GM12878 (cell line): ENCODE measurements at regions of chr10 and their contacts with region 1.

Region 1: DNA sequence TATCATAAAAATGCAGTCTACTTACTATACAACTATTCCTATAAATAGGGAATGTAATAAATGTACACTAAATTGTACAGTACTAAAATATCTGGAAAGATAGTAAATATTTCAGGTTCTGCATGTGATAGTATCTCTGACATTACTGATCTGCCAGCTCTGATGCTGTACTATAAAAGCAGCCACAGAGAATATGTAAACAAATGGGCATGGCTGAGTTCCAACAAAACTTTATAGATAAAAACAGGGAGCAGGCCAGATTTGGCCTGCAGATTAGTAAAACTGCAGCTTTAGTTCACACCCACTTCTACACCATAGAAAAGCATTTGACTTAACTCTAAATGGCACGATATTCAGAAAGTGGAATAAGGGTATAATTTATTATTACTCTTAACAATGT is 18.8 kb upstream of the TLL2 start:
- DNase-seq: no peak
- ATAC-seq: no peak
- H3K4me3 ChIP-seq: no peak overlapping the region
- H3K27ac ChIP-seq: no peak overlapping the region
- H3K4me1 ChIP-seq: no peaks in the 10 kb centered on the region
- H3K27me3 ChIP-seq: no peaks in the 10 kb centered on the region
- CTCF ChIP-seq: no peak
- EP300 ChIP-seq: no peak
- POLR2A ChIP-seq: no peak
- RAD21 ChIP-seq: no peak

Region 2: DNA sequence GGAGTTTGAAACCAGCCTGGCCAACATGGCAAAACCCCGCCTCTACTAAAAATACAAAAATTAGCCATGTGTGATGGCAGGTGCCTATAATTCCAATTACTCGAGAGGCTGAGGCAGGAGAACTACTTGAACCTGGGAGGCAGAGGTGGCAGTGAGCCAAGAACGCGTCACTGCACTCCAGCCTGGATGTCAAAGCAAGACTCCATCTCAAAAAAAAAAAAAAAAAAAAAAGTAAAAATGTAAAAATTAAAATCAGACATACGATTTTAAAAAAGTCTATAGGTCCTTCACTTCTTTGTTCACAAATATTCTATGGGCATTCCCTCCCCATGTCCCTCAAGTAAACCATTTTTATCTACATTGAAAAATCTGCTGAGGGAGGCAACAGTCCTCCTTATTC is 16.1 kb after region 1 on chr10:
- CTCF ChIA-PET with region 1: interaction called, 7 read pairs
- POLR2A ChIA-PET with region 1: no interaction called
- RAD21 ChIA-PET with region 1: no interaction called
- SMC1A ChIA-PET with region 1: interaction called, 11 read pairs
- in situ Hi-C with region 1: no loop called
- intact Hi-C with region 1: no loop called
- DNase-seq: no peak
- ATAC-seq: no peak
- H3K4me3 ChIP-seq: no peak overlapping the region
- H3K27ac ChIP-seq: no peak overlapping the region
- H3K4me1 ChIP-seq: no peaks in the 10 kb centered on the region
- H3K27me3 ChIP-seq: no peaks in the 10 kb centered on the region
- CTCF ChIP-seq: no peak
- EP300 ChIP-seq: no peak
- POLR2A ChIP-seq: no peak
- RAD21 ChIP-seq: no peak

Region 3: DNA sequence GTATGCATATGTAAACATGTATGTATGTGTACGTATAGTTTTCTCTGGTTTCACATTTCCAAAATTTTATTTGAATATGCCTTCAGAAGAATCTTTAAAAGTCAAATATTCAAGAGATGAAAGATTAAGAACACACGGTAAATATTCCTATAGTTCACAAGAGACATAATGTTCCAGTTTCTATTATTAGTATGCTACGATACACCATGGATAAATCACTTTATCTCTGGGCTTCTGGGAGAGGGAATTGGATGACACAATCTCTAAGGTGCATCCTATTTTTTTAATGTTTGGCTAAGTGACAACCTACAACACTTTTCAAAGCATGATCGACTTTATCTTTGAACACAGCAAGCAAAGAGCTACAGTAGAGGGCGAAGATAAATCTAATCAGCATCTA is 40.5 kb after region 1 on chr10:
- CTCF ChIA-PET with region 1: no interaction called
- POLR2A ChIA-PET with region 1: no interaction called
- RAD21 ChIA-PET with region 1: no interaction called
- SMC1A ChIA-PET with region 1: no interaction called
- in situ Hi-C with region 1: no loop called
- intact Hi-C with region 1: loop called (anchors 2 kb)
- DNase-seq: no peak
- ATAC-seq: no peak
- H3K4me3 ChIP-seq: no peak overlapping the region
- H3K27ac ChIP-seq: no peak overlapping the region
- H3K4me1 ChIP-seq: peaks cover 10% of the 10 kb centered on the region; the same call in 1 of the 2 replicates
- H3K27me3 ChIP-seq: no peaks in the 10 kb centered on the region
- CTCF ChIP-seq: no peak
- EP300 ChIP-seq: no peak
- POLR2A ChIP-seq: no peak
- RAD21 ChIP-seq: no peak

Region 4: GRCh38 chr10:96794866-96795733 is 262.6 kb after region 1 on chr10:
- CTCF ChIA-PET with region 1: no interaction called
- POLR2A ChIA-PET with region 1: no interaction called
- RAD21 ChIA-PET with region 1: no interaction called
- SMC1A ChIA-PET with region 1: no interaction called
- in situ Hi-C with region 1: no loop called
- intact Hi-C with region 1: no loop called
- DNase-seq: no peak
- ATAC-seq: no peak
- H3K4me3 ChIP-seq: no peak overlapping the region
- H3K27ac ChIP-seq: no peak overlapping the region
- H3K4me1 ChIP-seq: peaks cover under 1% of the 10 kb centered on the region; the same call in 1 of the 2 replicates
- H3K27me3 ChIP-seq: no peaks in the 10 kb centered on the region
- CTCF ChIP-seq: no peak
- EP300 ChIP-seq: no peak
- POLR2A ChIP-seq: no peak
- RAD21 ChIP-seq: no peak